Gastrocnemius medialis (tissue), 4 donors: ENCODE measurements at regions of chr1 and their contacts with region 1.

Region 1: DNA sequence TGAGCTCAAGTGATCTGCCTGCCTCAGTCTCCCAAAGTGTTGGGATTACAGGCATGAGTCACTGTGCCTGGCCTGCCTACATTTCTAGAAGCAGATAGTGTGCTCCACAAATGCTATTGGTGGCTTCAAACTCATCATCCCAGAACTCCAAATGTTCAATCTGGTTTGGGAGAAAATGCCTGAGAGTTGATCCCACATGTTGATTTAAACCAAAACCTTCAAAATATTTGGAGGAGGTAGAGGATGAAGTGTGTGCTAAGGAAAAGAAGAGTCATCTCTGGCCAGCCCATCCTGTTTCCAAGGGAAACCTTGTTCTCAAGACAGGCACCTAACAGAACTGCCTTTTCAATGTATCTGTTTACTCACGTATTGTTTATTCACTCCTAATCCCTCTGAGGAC is 55.4 kb upstream of the GRHL3 start:
- DNase-seq: no peak
- ATAC-seq: no peak
- H3K4me3 ChIP-seq: no peak overlapping the region
- H3K27ac ChIP-seq: no peak overlapping the region
- H3K4me1 ChIP-seq: no peaks in the 10 kb centered on the region
- H3K27me3 ChIP-seq: peaks cover 0 to 4% (median 0%) of the 10 kb centered on the region in 3 donors
- CTCF ChIP-seq: no peak
- POLR2A ChIP-seq: no peak

Region 2: GRCh38 chr1:24216276-24217074 is 47.3 kb before region 1 on chr1:
- in situ Hi-C with region 1: no loop called
- intact Hi-C with region 1: no loop called
- DNase-seq: no peak
- ATAC-seq: no peak
- H3K4me3 ChIP-seq: no peak overlapping the region
- H3K27ac ChIP-seq: no peak overlapping the region
- H3K4me1 ChIP-seq: no peaks in the 10 kb centered on the region
- H3K27me3 ChIP-seq: peaks cover 11 to 29% (median 23%) of the 10 kb centered on the region in 3 donors
- CTCF ChIP-seq: no peak
- POLR2A ChIP-seq: no peak

Region 3: GRCh38 chr1:24277420-24278169 is 13.8 kb after region 1 on chr1:
- in situ Hi-C with region 1: no loop called
- intact Hi-C with region 1: loop called (anchors 1 kb)
- DNase-seq: no peak
- ATAC-seq: no peak
- H3K4me3 ChIP-seq: no peak overlapping the region
- H3K27ac ChIP-seq: no peak overlapping the region
- H3K4me1 ChIP-seq: peaks cover 0 to 4% of the 10 kb centered on the region in 2 donors
- H3K27me3 ChIP-seq: peaks cover 0 to 9% (median 8%) of the 10 kb centered on the region in 3 donors
- CTCF ChIP-seq: no peak
- POLR2A ChIP-seq: no peak